ENCODE measurements at regions of chr1 and their contacts with region 1.

Region 1: GRCh38 chr1:241654019-241654418 is 1.9 kb downstream of the WDR64 start:
- DNase-seq: no peak
- H3K4me3 ChIP-seq: no peak overlapping the region
- H3K27ac ChIP-seq: no peak overlapping the region
- H3K4me1 ChIP-seq: no peaks in the 10 kb centered on the region
- CTCF ChIP-seq: no peak

Region 2: GRCh38 chr1:241702438-241702837 is 48.4 kb after region 1 on chr1:
- CTCF ChIA-PET with region 1: no interaction called
- POLR2A ChIA-PET with region 1: no interaction called
- intact Hi-C with region 1: loop called (anchors 5 kb)
- DNase-seq: no peak
- H3K4me3 ChIP-seq: no peak overlapping the region
- H3K27ac ChIP-seq: no peak overlapping the region
- H3K4me1 ChIP-seq: no peaks in the 10 kb centered on the region
- CTCF ChIP-seq: no peak